CD4-positive, alpha-beta memory T cell (primary cell): ENCODE measurements at regions of chr2 and their contacts with region 1.

Region 1: DNA sequence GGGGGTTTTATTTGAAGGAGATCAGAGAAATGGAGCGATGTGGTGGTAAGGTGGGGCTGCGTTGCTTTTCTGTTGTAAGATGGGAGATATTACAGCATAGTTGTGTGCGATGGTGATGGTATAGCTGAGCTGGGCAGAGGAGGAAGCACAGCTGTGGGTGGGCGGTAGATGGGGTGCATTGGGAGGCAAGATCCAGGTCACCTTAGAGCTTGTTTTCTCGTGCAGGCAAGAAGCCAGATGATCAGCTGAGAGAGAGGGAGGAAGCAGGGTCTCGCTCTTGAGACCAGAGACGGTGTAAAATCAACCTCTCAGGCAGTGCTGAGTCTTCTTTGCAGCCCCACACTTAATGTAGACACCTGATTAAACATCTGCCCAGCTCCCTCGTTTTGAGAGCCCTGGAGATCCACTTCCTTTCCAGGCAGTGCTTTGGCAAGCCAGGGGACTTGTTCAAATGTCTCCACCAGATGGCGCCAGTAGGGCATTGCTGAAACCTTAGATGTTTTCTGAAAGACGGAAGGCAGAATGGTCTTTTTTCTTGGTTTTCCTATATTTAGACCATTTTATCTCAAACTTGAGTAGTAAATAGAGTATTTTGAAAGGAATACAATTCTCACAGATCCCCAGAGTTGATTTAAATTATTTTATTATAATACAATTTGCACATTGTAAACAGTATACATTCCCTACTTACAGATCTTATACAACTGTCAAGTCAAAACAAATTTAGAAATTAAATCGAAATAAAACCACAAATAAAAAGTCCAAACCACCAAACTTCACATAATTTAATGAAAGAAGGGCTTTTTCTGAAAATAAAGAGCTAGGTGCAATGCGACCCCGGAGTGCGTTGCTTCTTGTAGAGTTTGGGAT is 21.1 kb upstream of the LYPD6B start:
- DNase-seq: peak; percentile 60 to 72 (median 65)
- H3K4me3 ChIP-seq: no peak overlapping the region
- H3K4me3 Mint-ChIP-seq: no peak overlapping the region
- H3K27ac ChIP-seq: no peak overlapping the region
- H3K27ac Mint-ChIP-seq: peak overlapping the region in 2 of 7 donors; percentile 26
- H3K4me1 ChIP-seq: no peaks in the 10 kb centered on the region
- H3K4me1 Mint-ChIP-seq: peaks cover 2 to 12% (median 6%) of the 10 kb centered on the region in 4 donors
- H3K27me3 ChIP-seq: no peaks in the 10 kb centered on the region
- H3K27me3 Mint-ChIP-seq: no peaks in the 10 kb centered on the region

Region 2: GRCh38 chr2:148948868-148949267 is 68.5 kb before region 1 on chr2:
- CTCF ChIA-PET with region 1: no interaction called
- POLR2A ChIA-PET with region 1: no interaction called
- intact Hi-C with region 1: no loop called
- DNase-seq: no peak
- H3K4me3 ChIP-seq: no peak overlapping the region
- H3K4me3 Mint-ChIP-seq: no peak overlapping the region
- H3K27ac ChIP-seq: no peak overlapping the region
- H3K27ac Mint-ChIP-seq: no peak overlapping the region
- H3K4me1 ChIP-seq: no peaks in the 10 kb centered on the region
- H3K4me1 Mint-ChIP-seq: no peaks in the 10 kb centered on the region
- H3K27me3 ChIP-seq: no peaks in the 10 kb centered on the region
- H3K27me3 Mint-ChIP-seq: no peaks in the 10 kb centered on the region

Region 3: DNA sequence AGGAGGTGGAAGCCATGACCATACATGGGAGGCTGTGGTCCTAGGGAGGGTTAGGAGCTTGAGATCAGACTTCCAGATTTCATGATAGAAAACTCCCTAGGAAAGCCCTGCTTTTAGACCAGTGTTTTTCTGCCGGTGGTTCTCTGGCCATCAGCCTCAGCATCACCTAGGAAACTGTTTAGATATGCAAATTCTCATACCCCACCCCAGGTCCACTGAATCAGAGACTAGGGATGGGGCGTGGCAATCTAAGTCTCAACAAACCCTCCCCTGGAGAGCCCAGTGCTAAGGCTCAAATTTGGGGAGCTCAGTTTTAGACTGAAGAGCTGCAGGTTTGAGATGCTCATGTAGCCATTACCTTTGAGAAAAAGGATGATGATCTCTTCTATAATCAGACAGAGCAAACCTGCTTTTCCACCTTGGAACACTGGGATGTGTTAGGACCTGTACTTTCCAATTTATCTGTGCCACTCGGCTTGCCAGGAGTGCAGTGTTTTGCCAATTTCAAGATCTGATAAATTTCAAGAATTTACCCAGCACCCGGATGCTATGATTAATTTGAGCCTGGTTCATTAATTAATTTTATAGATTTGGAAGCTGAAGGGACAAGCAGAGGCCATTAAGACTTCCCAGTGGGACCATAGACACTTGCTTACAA is 10.3 kb before region 1 on chr2:
- CTCF ChIA-PET with region 1: interaction called, 24 read pairs
- POLR2A ChIA-PET with region 1: no interaction called
- intact Hi-C with region 1: no loop called
- DNase-seq: no peak
- H3K4me3 ChIP-seq: no peak overlapping the region
- H3K4me3 Mint-ChIP-seq: no peak overlapping the region
- H3K27ac ChIP-seq: no peak overlapping the region
- H3K27ac Mint-ChIP-seq: no peak overlapping the region
- H3K4me1 ChIP-seq: no peaks in the 10 kb centered on the region
- H3K4me1 Mint-ChIP-seq: no peaks in the 10 kb centered on the region
- H3K27me3 ChIP-seq: no peaks in the 10 kb centered on the region
- H3K27me3 Mint-ChIP-seq: no peaks in the 10 kb centered on the region

Region 4: DNA sequence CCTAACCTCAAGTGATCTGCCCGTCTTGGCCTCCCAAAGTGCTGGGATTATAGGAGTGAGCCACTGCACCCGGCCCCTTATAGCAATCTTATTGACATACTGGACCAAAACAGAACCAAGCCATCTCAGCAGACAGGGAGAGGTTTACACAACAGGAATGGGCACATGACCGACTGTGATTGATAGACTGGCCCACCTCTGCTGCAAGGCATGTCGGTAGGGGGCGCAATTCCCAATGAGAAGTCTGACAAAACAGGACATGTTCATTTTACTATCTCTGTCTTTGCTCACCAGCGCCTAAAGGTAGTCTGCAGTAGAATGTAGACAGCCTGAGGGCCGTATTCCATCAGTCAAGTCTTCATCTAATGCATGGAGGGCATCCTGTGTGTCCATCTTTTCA is 23.1 kb after region 1 on chr2:
- CTCF ChIA-PET with region 1: interaction called, 98 read pairs
- POLR2A ChIA-PET with region 1: interaction called, 3 read pairs
- intact Hi-C with region 1: no loop called
- DNase-seq: peak in 4 of 5 donors; percentile 28 to 36 (median 34)
- H3K4me3 ChIP-seq: no peak overlapping the region
- H3K4me3 Mint-ChIP-seq: peak overlapping the region in 1 of 8 donors; percentile 63
- H3K27ac ChIP-seq: no peak overlapping the region
- H3K27ac Mint-ChIP-seq: no peak overlapping the region
- H3K4me1 ChIP-seq: no peaks in the 10 kb centered on the region
- H3K4me1 Mint-ChIP-seq: peaks cover 0 to 5% (median 0%) of the 10 kb centered on the region in 4 donors
- H3K27me3 ChIP-seq: peaks cover 10% of the 10 kb centered on the region
- H3K27me3 Mint-ChIP-seq: peaks cover 25 to 36% of the 10 kb centered on the region in 2 donors

Region 5: GRCh38 chr2:149313512-149313972 is 296.2 kb after region 1 on chr2:
- CTCF ChIA-PET with region 1: interaction called, 18 read pairs
- POLR2A ChIA-PET with region 1: no interaction called
- intact Hi-C with region 1: loop called (anchors 1 kb)
- DNase-seq: peak in 2 of 5 donors; percentile 2 to 6
- H3K4me3 ChIP-seq: no peak overlapping the region
- H3K4me3 Mint-ChIP-seq: peak overlapping the region in 3 of 8 donors; percentile 6 to 20 (median 12)
- H3K27ac ChIP-seq: no peak overlapping the region
- H3K27ac Mint-ChIP-seq: no peak overlapping the region
- H3K4me1 ChIP-seq: peaks cover 3% of the 10 kb centered on the region
- H3K4me1 Mint-ChIP-seq: peaks cover 0 to 6% (median 2%) of the 10 kb centered on the region in 4 donors
- H3K27me3 ChIP-seq: no peaks in the 10 kb centered on the region
- H3K27me3 Mint-ChIP-seq: peaks cover 13 to 17% of the 10 kb centered on the region in 2 donors